ENCODE measurements at regions of chr6 and their contacts with region 1.

Region 1: DNA sequence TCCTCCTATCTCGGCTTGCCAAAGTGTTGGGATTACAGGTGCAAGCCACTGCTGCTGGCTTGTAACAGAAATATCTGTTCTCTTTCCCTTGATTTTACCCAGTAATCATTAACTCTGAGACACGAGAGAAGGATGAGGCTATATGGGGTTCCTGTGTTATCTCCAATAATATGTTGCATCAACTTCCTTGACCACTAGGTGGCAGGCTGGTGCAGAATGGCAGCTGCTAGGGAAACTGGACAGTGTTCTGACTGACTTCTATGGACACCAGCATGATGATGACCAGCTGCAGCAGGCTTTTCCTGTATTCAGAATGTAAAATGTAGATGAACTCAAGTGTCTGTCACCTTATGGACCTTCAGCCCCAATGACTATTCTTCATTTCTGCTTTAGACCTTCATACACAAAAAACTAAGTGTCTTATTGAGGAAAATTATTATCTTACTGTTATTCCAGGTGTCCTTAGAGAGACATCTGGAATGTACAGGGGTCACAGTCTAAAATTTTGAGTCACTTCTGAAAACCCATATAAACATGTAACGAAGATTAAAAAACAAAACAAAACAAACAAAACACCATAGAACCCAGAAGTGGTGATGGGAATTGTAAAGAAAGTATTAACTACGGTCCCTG is 20.4 kb upstream of the CD109 start:
- DNase-seq: peak; percentile 88
- ATAC-seq: peak; percentile 81
- H3K4me3 ChIP-seq: no peak overlapping the region
- H3K27ac ChIP-seq: no peak overlapping the region
- H3K4me1 ChIP-seq: peaks cover 11% of the 10 kb centered on the region
- H3K27me3 ChIP-seq: no peaks in the 10 kb centered on the region
- CTCF ChIP-seq: peak; percentile 86

Region 2: GRCh38 chr6:73349311-73349710 is 326.3 kb before region 1 on chr6:
- CTCF ChIA-PET with region 1: no interaction called
- POLR2A ChIA-PET with region 1: no interaction called
- intact Hi-C with region 1: no loop called
- DNase-seq: no peak
- ATAC-seq: no peak
- H3K4me3 ChIP-seq: no peak overlapping the region
- H3K27ac ChIP-seq: no peak overlapping the region
- H3K4me1 ChIP-seq: no peaks in the 10 kb centered on the region
- H3K27me3 ChIP-seq: no peaks in the 10 kb centered on the region
- CTCF ChIP-seq: no peak

Region 3: DNA sequence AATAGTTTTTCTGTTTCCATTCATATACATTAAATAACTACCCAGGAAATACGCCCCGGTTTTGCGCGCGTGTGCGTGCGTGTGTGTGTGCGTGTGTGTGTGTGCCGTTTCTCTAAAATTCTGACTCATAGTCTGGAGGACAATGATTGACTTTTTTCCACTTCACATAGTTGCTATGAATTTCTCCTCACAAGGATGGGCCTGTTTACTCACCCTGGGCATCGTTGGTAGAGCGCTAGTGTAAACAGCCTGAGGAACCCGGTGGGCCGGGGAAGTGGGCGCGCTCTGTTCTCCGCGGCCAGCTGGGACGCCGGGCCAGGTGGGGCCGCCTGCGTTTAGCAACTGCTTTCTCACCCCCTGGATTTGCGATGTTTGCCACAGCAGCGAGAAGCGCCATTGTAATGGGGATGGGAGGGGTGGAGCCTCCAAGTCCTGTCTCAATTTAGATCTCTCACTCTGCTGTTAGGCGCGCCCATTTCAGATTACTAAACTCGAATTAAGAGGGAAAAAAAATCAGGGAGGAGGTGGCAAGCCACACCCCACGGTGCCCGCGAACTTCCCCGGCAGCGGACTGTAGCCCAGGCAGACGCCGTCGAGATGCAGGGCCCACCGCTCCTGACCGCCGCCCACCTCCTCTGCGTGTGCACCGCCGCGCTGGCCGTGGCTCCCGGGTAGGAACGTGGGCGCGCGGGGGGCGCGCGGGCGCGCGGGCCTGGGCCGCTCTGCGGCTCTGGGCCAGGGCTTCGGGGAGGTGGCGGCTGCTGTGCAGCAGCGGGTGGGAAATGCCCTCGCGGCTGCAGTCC is 20.2 kb after region 1 on chr6 and contains the start of gene CD109:
- CTCF ChIA-PET with region 1: no interaction called
- POLR2A ChIA-PET with region 1: no interaction called
- intact Hi-C with region 1: loop called (anchors 2 kb)
- DNase-seq: peak; percentile 77
- ATAC-seq: peak; percentile 77
- H3K4me3 ChIP-seq: peak within 1 kb of the TSS; percentile 84
- H3K27ac ChIP-seq: peak within 1 kb of the TSS; percentile 98
- H3K4me1 ChIP-seq: peaks cover 32% of the 10 kb centered on the region
- H3K27me3 ChIP-seq: no peaks in the 10 kb centered on the region
- CTCF ChIP-seq: no peak
- total RNA-seq, gene CD109: 16.8 and 19.1 TPM in 2 replicates

Region 4: GRCh38 chr6:73706971-73707370 is 31.4 kb after region 1 on chr6:
- CTCF ChIA-PET with region 1: no interaction called
- POLR2A ChIA-PET with region 1: no interaction called
- intact Hi-C with region 1: no loop called
- DNase-seq: no peak
- ATAC-seq: no peak
- H3K4me3 ChIP-seq: no peak overlapping the region
- H3K27ac ChIP-seq: no peak overlapping the region
- H3K4me1 ChIP-seq: peaks cover 25% of the 10 kb centered on the region
- H3K27me3 ChIP-seq: no peaks in the 10 kb centered on the region
- CTCF ChIP-seq: no peak

Region 5: GRCh38 chr6:73732845-73733675 is 57.5 kb after region 1 on chr6:
- CTCF ChIA-PET with region 1: interaction called, 6 read pairs
- POLR2A ChIA-PET with region 1: no interaction called
- intact Hi-C with region 1: loop called (anchors 1 kb)
- DNase-seq: peak; percentile 75
- ATAC-seq: peak; percentile 88
- H3K4me3 ChIP-seq: no peak overlapping the region
- H3K27ac ChIP-seq: no peak overlapping the region
- H3K4me1 ChIP-seq: no peaks in the 10 kb centered on the region
- H3K27me3 ChIP-seq: no peaks in the 10 kb centered on the region
- CTCF ChIP-seq: peak; percentile 87

Measured in PC-3 (cell line).